ENCODE measurements at regions of chr21 and their contacts with region 1.

Region 1: GRCh38 chr21:38733973-38734546 is 71.7 kb upstream of the ETS2 start:
- DNase-seq: peak; percentile 61
- ATAC-seq: peak; percentile 85
- H3K4me3 ChIP-seq: no peak overlapping the region
- H3K27ac ChIP-seq: no peak overlapping the region
- H3K4me1 ChIP-seq: peaks cover 31% of the 10 kb centered on the region
- H3K27me3 ChIP-seq: no peaks in the 10 kb centered on the region
- CTCF ChIP-seq: peak; percentile 96
- EP300 ChIP-seq: no peak
- POLR2A ChIP-seq: no peak
- RAD21 ChIP-seq: peak; percentile 92

Region 2: DNA sequence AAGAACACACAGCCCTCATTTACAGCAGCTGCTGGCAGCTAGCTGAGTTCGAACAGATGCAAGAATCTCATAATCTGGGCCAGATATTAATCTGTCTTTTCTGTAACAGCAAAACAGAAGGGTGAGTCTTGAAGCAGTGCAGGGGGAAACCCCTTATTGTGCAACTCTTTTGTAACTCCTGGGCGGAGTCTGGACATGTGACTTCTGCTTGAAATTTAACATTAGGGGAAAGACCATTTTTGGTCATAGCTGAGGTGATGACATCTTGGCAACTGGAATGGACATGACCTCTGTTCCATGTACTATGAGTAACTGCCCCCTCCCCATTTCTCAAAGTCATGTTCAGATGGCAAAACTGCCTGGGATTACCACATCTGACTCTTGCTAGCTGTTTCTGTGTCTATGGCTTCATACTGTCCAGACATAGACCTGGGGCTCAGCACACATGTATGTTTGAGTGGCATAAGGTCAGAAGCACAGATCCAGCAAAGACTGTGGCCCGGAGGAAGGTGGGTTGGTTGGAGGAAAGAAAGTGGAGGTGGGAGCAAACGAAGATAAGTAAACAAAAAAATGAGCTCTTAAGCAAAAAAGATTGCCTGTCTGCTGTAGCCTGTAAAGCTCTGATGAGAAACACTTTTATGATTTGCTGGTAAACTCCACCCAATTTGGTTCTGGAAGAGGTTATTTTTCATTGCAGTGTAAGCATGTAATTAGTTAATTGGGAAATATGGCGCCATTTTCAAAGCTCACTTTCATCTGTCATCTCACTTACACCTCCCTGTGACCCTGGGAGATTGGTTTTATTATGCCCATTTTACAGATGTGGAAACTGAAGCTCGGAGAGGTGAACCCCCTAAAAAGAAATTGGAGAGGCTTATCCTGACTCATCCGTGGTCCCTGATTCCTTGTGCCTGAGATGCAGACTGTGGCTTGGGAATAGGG is 97.7 kb after region 1 on chr21:
- CTCF ChIA-PET with region 1: interaction called, 8 read pairs
- POLR2A ChIA-PET with region 1: no interaction called
- in situ Hi-C with region 1: no loop called
- intact Hi-C with region 1: loop called (anchors 5 kb)
- DNase-seq: peak; percentile 91
- ATAC-seq: peak; percentile 86
- H3K4me3 ChIP-seq: no peak overlapping the region; a peak in 1 of 6 replicates
- H3K27ac ChIP-seq: peak overlapping the region; percentile 31
- H3K4me1 ChIP-seq: peaks cover 51% of the 10 kb centered on the region
- H3K27me3 ChIP-seq: no peaks in the 10 kb centered on the region
- CTCF ChIP-seq: no peak
- EP300 ChIP-seq: peak; percentile 49 to 69; a peak in 2 of 4 replicates
- POLR2A ChIP-seq: no peak
- RAD21 ChIP-seq: no peak

Region 3: DNA sequence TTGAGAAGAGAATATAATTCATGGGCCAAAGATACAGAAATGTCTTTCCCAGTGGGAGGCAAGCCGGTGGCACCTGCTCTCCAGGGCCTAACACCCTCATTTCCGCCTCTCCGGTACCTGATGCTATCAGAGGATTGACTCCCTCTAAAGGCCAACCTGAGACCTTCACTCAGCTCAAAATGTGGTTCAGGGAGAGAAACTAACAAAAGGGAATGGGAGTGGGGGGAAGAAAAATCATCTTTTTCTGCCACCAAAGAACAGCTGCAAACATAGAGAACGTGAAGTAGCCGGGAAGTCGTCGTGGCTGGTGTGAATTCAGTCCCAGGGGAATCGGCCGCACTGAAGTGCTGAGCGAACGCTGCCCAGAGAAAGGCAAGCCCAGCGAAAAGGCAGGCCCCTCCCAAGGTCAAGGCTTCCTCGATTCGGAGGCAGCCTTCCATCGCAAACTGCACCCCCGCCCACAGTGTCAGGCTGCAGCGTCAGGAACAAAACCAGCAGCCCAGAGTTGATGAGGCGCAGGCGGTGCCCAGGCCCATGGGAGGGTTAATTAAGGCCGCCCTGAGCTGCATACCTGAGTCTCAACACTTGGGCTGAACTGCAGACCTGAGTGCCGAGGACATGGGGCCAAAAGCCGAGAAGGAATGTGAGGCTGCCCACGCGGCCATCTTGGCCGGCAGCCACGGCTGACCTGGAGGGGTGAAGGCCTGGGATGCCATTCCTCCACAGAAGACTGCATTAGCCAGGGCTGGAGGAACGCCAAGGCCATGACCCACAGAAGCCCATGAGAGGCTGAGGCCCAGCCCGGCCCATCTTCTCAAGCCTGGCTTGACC is 289.0 kb after region 1 on chr21:
- CTCF ChIA-PET with region 1: no interaction called
- POLR2A ChIA-PET with region 1: no interaction called
- in situ Hi-C with region 1: no loop called
- intact Hi-C with region 1: loop called (anchors 2 kb)
- DNase-seq: peak; percentile 37
- ATAC-seq: peak; percentile 60
- H3K4me3 ChIP-seq: no peak overlapping the region
- H3K27ac ChIP-seq: no peak overlapping the region
- H3K4me1 ChIP-seq: peaks cover 64% of the 10 kb centered on the region
- H3K27me3 ChIP-seq: no peaks in the 10 kb centered on the region
- CTCF ChIP-seq: peak; percentile 46; the same call in 1 of the 2 replicates
- EP300 ChIP-seq: no peak
- POLR2A ChIP-seq: no peak
- RAD21 ChIP-seq: no peak

Region 4: GRCh38 chr21:39079617-39080016 is 345.6 kb after region 1 on chr21:
- CTCF ChIA-PET with region 1: no interaction called
- POLR2A ChIA-PET with region 1: no interaction called
- in situ Hi-C with region 1: no loop called
- intact Hi-C with region 1: loop called (anchors 5 kb)
- DNase-seq: peak; percentile 73
- ATAC-seq: peak; percentile 63
- H3K4me3 ChIP-seq: no peak overlapping the region
- H3K27ac ChIP-seq: peak overlapping the region; percentile 30
- H3K4me1 ChIP-seq: peaks cover 77% of the 10 kb centered on the region
- H3K27me3 ChIP-seq: no peaks in the 10 kb centered on the region
- CTCF ChIP-seq: no peak
- EP300 ChIP-seq: peak in 1 of 2 experiments; percentile 46; a peak in 1 of 4 replicates
- POLR2A ChIP-seq: no peak
- RAD21 ChIP-seq: no peak

Region 5: GRCh38 chr21:39125752-39126485 is 391.9 kb after region 1 on chr21:
- CTCF ChIA-PET with region 1: interaction called, 5 read pairs
- POLR2A ChIA-PET with region 1: no interaction called
- in situ Hi-C with region 1: no loop called
- intact Hi-C with region 1: loop called (anchors 1 kb)
- DNase-seq: peak; percentile 80
- ATAC-seq: peak; percentile 99
- H3K4me3 ChIP-seq: no peak overlapping the region
- H3K27ac ChIP-seq: no peak overlapping the region
- H3K4me1 ChIP-seq: peaks cover 33% of the 10 kb centered on the region
- H3K27me3 ChIP-seq: no peaks in the 10 kb centered on the region
- CTCF ChIP-seq: peak; percentile 92
- EP300 ChIP-seq: peak in 1 of 2 experiments; percentile 31; a peak in 1 of 4 replicates
- POLR2A ChIP-seq: no peak
- RAD21 ChIP-seq: peak; percentile 79

Measured in HepG2 (cell line).